ENCODE measurements at regions of chr1 and their contacts with region 1.

Region 1: GRCh38 chr1:91124989-91125417 is 103.2 kb upstream of the ZNF644 start:
- DNase-seq: no peak
- ATAC-seq: no peak
- H3K4me3 Mint-ChIP-seq: no peak overlapping the region
- H3K27ac Mint-ChIP-seq: peak overlapping the region; percentile 98
- H3K4me1 Mint-ChIP-seq: peaks cover 70% of the 10 kb centered on the region
- H3K27me3 Mint-ChIP-seq: no peaks in the 10 kb centered on the region
- CTCF ChIP-seq: no peak

Region 2: DNA sequence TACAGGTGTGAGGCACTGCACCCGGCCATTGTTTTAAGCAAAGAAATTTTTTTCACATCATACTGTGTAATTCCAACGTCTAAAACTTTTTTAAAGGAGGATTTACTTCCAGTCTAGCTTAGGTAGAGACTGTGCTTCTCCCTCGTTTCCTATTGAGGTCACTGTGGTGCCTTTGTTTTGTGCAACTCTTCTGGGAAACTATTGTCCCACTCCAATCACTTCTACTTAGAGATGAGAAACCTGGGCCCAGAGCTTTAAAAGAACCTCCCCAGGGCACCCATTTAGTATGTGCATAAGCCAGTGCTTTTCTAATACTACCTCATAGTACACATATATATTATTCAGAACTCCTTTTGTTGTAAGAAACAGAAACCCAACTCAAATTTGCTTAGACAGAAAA is 16.9 kb after region 1 on chr1:
- CTCF ChIA-PET with region 1: interaction called, 11 read pairs
- POLR2A ChIA-PET with region 1: no interaction called
- DNase-seq: no peak
- ATAC-seq: peak; percentile 83
- H3K4me3 Mint-ChIP-seq: no peak overlapping the region
- H3K27ac Mint-ChIP-seq: no peak overlapping the region
- H3K4me1 Mint-ChIP-seq: peaks cover 41% of the 10 kb centered on the region
- H3K27me3 Mint-ChIP-seq: no peaks in the 10 kb centered on the region
- CTCF ChIP-seq: no peak

Region 3: DNA sequence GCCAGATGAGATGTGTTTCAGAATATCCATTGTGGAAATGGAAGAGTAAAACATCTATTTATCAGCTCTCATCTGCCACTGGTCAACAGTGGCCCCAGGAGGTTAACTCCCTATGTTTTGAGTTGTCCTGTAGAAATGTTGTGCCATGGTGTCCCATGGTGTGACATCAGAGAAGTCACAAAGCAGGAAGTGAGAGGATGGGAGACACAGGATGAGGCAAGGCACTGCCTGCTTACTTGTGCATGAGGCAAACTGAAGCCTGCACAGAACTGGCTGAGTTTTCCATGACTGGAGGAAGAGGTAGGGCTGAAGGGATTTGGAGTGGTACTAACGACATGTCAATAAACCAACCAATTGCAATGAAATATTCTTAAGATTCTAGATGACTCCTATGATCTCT is 28.3 kb after region 1 on chr1:
- CTCF ChIA-PET with region 1: no interaction called
- POLR2A ChIA-PET with region 1: no interaction called
- DNase-seq: no peak
- ATAC-seq: no peak
- H3K4me3 Mint-ChIP-seq: no peak overlapping the region
- H3K27ac Mint-ChIP-seq: no peak overlapping the region
- H3K4me1 Mint-ChIP-seq: peaks cover 10% of the 10 kb centered on the region
- H3K27me3 Mint-ChIP-seq: no peaks in the 10 kb centered on the region
- CTCF ChIP-seq: no peak

Region 4: DNA sequence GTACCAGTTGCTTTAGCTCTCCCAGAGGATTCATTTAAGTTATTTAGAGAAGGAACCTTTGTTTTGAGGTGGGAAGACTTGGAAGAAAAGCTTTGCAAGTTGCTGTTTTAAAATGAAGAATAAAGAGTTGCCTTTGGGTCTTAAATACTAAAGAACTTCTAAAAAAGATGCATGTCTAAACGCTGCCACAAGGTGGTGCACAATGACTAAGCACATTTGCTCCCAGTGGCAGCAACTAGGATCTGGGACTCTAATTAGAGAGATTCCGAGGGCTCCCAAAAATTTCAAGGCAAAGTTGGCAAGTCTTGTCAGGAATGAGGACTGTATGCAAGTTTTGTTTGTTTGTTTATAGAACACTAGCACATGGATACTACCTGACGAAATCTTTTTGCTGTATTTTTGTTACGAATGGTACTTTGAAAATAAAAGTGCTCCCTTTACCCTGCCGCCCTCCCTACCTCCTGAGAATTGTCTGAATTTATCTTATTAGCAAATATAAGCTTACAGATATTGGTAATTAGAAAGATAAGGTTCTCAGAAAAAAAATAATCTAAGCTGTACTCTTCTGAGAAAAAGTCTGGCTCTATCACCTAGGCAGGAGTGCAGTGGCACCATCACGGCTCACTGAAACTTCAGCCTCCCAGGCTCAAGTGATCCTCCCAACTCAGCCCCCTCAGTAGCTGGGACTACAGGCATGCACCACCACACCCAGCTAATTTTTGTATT is 157.9 kb after region 1 on chr1:
- CTCF ChIA-PET with region 1: no interaction called
- POLR2A ChIA-PET with region 1: no interaction called
- DNase-seq: peak; percentile 62
- ATAC-seq: peak; percentile 65
- H3K4me3 Mint-ChIP-seq: no peak overlapping the region
- H3K27ac Mint-ChIP-seq: 0 out of 2 replicates have a peak overlapping the region, but pooled peaks have one; percentile 12
- H3K4me1 Mint-ChIP-seq: peaks cover 12% of the 10 kb centered on the region
- H3K27me3 Mint-ChIP-seq: no peaks in the 10 kb centered on the region
- CTCF ChIP-seq: peak; percentile 58